ENCODE measurements at regions of chr3 and their contacts with region 1.

Region 1: DNA sequence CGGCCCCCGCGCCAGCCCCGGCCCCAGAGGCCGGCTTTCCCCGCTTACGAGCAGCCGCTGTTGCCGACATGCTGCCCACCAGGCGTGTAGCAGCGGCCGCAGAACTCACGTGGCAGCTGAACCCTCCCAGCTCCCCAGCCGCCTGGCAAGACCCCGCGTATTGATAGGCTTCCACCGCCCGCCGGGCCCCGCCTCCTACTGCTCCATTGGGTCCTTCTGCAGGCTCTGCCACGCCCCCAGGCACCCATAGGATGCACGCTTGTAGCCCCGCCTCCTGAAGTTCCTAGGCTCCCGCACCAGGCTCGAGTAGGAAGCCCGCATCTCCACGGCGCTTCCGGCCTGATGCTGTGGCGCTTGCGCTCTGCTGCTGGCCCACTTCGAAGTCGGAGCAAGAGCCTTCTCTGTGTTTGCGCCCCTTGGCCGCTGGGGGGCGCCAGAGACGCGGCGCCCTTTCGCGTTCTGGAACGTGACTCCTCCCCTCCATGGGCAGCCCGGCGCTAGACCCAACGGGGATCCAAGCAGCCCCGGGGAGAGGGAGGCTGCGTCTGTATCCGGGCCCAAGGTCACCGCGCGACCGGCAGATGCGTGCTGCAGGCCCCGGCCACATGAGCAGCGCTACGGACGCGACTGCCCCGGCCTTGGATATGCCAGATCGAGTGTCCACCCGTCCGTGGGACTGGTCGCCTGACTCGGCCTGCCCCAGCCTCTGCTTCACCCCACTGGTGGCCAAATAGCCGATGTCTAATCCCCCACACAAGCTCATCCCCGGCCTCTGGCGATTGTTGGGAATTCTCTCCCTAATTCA is at the starts of genes PARP3 and RRP9:
- DNase-seq: peak; percentile 100
- ATAC-seq: peak; percentile 86
- H3K4me3 ChIP-seq: peak within 1 kb of the TSS; percentile 92
- H3K27ac ChIP-seq: peak within 1 kb of the TSS; percentile 81
- H3K4me1 ChIP-seq: peaks cover 33% of the 10 kb centered on the region
- H3K27me3 ChIP-seq: no peaks in the 10 kb centered on the region
- CTCF ChIP-seq: peak; percentile 97
- total RNA-seq, gene PARP3: 19.3 and 30.5 TPM in 2 replicates
- total RNA-seq, gene RRP9: 95.0 and 112 TPM in 2 replicates

Region 2: GRCh38 chr3:51670823-51671733 is 270.9 kb before region 1 on chr3 and contains the start of gene TEX264:
- CTCF ChIA-PET with region 1: no interaction called
- POLR2A ChIA-PET with region 1: no interaction called
- intact Hi-C with region 1: loop called (anchors 5 kb)
- DNase-seq: peak; percentile 95
- ATAC-seq: peak; percentile 67
- H3K4me3 ChIP-seq: peak within 1 kb of the TSS; percentile 91
- H3K27ac ChIP-seq: peak within 1 kb of the TSS; percentile 64
- H3K4me1 ChIP-seq: peaks cover 57% of the 10 kb centered on the region
- H3K27me3 ChIP-seq: no peaks in the 10 kb centered on the region
- CTCF ChIP-seq: no peak
- total RNA-seq, gene TEX264: 85.5 and 88.1 TPM in 2 replicates

Region 3: GRCh38 chr3:51974963-51975851 is 33.2 kb after region 1 on chr3 and contains the start of gene ABHD14A:
- CTCF ChIA-PET with region 1: interaction called, 46 read pairs
- POLR2A ChIA-PET with region 1: interaction called, 7 read pairs
- intact Hi-C with region 1: loop called (anchors 1 kb)
- DNase-seq: peak; percentile 81
- ATAC-seq: peak; percentile 69
- H3K4me3 ChIP-seq: peak within 1 kb of the TSS; percentile 99
- H3K27ac ChIP-seq: peak within 1 kb of the TSS; percentile 32
- H3K4me1 ChIP-seq: peaks cover 23% of the 10 kb centered on the region
- H3K27me3 ChIP-seq: no peaks in the 10 kb centered on the region
- CTCF ChIP-seq: no peak
- total RNA-seq, gene ABHD14A: 22.1 and 23.4 TPM in 2 replicates

Region 4: GRCh38 chr3:51982782-51983577 is 41.0 kb after region 1 on chr3 and contains the start of gene ACY1:
- CTCF ChIA-PET with region 1: interaction called, 13 read pairs
- POLR2A ChIA-PET with region 1: interaction called, 6 read pairs
- intact Hi-C with region 1: loop called (anchors 2 kb)
- DNase-seq: peak; percentile 93
- ATAC-seq: peak; percentile 86
- H3K4me3 ChIP-seq: peak within 1 kb of the TSS; percentile 64
- H3K27ac ChIP-seq: peak within 1 kb of the TSS; percentile 79
- H3K4me1 ChIP-seq: peaks cover 20% of the 10 kb centered on the region
- H3K27me3 ChIP-seq: no peaks in the 10 kb centered on the region
- CTCF ChIP-seq: peak; percentile 27; the same call in 1 of the 2 replicates
- total RNA-seq, gene ACY1: 71.3 and 113 TPM in 2 replicates

Region 5: GRCh38 chr3:51995346-51996163 is 53.6 kb after region 1 on chr3 and contains the start of gene RPL29:
- CTCF ChIA-PET with region 1: interaction called, 6 read pairs
- POLR2A ChIA-PET with region 1: no interaction called
- intact Hi-C with region 1: loop called (anchors 1 kb)
- DNase-seq: peak; percentile 96
- ATAC-seq: peak; percentile 77
- H3K4me3 ChIP-seq: peak within 1 kb of the TSS; percentile 93
- H3K27ac ChIP-seq: peak within 1 kb of the TSS; percentile 58
- H3K4me1 ChIP-seq: peaks cover 22% of the 10 kb centered on the region
- H3K27me3 ChIP-seq: no peaks in the 10 kb centered on the region
- CTCF ChIP-seq: no peak
- total RNA-seq, gene RPL29: 1,539 and 1,807 TPM in 2 replicates

Region 6: GRCh38 chr3:52144034-52144795 is 202.2 kb after region 1 on chr3:
- CTCF ChIA-PET with region 1: no interaction called
- POLR2A ChIA-PET with region 1: no interaction called
- intact Hi-C with region 1: loop called (anchors 2 kb)
- DNase-seq: peak; percentile 86
- ATAC-seq: peak; percentile 95
- H3K4me3 ChIP-seq: no peak overlapping the region
- H3K27ac ChIP-seq: no peak overlapping the region
- H3K4me1 ChIP-seq: peaks cover 2% of the 10 kb centered on the region; the same call in 1 of the 2 replicates
- H3K27me3 ChIP-seq: no peaks in the 10 kb centered on the region
- CTCF ChIP-seq: peak; percentile 93

Region 7: DNA sequence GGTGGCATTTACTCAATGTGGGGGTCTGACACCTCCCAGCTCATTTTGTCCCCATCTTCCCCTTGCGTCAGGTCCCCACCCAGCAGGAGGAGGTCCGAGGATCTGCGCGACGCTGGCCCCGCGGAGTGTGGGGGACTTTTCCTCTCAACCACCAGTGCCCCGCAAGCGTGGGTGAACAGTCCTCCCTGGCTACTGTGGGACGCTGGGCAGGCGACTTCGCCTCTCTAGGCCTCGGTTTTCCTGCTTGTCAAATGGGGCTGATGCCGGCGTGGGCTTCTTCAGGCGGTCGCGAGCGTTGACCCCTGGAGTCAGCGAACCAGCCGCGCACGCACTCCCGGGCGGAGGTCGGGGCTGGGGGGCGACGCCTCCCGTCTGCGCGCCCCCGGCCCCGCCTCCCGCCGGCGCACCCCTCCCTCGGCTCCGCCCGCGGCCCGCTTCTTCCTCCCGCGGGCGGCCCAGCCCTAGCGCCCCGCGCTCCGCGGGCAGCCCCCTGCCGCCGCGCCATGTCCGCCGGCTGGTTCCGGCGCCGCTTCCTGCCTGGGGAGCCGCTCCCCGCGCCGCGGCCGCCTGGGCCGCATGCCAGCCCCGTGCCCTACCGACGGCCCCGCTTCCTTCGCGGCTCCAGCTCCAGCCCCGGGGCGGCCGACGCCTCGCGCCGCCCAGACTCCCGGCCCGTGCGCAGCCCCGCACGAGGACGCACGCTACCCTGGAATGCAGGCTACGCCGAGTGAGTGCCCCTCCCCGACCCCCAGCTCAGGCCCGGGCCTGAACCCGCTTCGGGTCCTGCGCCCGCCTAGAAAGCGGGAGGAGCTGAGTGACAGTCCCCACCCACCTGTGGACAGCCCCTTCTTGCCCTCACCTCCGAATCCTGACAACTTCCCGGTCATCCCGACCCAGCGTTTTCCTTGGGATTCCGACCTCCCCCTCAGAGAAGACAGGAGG is 303.6 kb after region 1 on chr3 and contains the start of gene PPM1M:
- CTCF ChIA-PET with region 1: no interaction called
- POLR2A ChIA-PET with region 1: interaction called, 14 read pairs
- intact Hi-C with region 1: no loop called
- DNase-seq: peak; percentile 62
- ATAC-seq: peak; percentile 54
- H3K4me3 ChIP-seq: peak within 1 kb of the TSS; percentile 76
- H3K27ac ChIP-seq: no peak within 1 kb of the TSS
- H3K4me1 ChIP-seq: peaks cover 31% of the 10 kb centered on the region
- H3K27me3 ChIP-seq: no peaks in the 10 kb centered on the region
- CTCF ChIP-seq: no peak
- total RNA-seq, gene PPM1M: 8.5 and 12.4 TPM in 2 replicates